ENCODE measurements at regions of chr5 and their contacts with region 1.

Region 1: DNA sequence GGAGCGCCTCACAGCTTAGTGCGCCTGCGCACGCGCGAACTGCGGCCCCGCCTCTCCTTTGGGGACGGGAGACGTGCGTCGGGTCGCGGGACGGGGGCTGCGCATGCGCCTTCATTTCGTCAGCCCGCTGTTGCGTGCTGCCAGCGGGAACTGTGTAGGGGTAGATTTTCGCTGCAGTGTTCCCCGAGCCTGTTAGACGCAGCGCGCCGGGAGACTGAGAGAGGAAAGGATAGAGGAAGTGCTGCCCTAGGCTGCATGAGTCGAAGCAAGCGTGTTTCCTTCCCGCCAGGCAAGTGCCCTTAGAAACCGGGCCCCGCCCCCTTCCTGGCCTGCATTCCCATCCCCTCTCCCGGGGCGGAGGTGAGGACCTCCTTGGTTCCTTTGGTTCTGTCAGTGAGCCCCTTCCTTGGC is 12.3 kb downstream of the ITGA1 start:
- DNase-seq: peak; percentile 97
- ATAC-seq: peak; percentile 88
- H3K4me3 Mint-ChIP-seq: peak overlapping the region; percentile 93
- H3K27ac Mint-ChIP-seq: peak overlapping the region; percentile 97
- H3K4me1 Mint-ChIP-seq: peaks cover 58% of the 10 kb centered on the region
- H3K27me3 Mint-ChIP-seq: no peaks in the 10 kb centered on the region

Region 2: DNA sequence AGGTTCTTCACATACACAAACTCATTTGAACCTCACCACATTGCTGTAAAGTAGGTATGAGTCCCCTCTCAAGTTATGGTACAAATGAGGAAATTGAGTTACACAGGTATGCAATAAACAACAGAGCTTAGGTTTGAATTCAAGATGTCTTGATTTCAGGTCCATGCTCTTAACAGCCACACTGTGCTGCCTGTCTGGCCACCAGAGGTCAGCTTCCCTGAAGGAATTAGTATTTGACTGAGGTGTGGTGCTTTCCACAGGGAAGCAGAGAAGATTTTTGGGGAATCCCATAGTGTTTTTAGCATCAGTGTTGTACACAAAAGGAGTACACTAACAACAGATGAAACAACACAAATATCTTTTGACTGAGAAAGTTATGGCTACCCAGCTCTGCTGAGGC is 106.7 kb before region 1 on chr5:
- CTCF ChIA-PET with region 1: interaction called, 36 read pairs
- POLR2A ChIA-PET with region 1: interaction called, 3 read pairs
- DNase-seq: peak; percentile 54
- ATAC-seq: peak; percentile 55
- H3K4me3 Mint-ChIP-seq: no peak overlapping the region
- H3K27ac Mint-ChIP-seq: no peak overlapping the region
- H3K4me1 Mint-ChIP-seq: peaks cover 20% of the 10 kb centered on the region
- H3K27me3 Mint-ChIP-seq: peaks cover 4% of the 10 kb centered on the region

Region 3: DNA sequence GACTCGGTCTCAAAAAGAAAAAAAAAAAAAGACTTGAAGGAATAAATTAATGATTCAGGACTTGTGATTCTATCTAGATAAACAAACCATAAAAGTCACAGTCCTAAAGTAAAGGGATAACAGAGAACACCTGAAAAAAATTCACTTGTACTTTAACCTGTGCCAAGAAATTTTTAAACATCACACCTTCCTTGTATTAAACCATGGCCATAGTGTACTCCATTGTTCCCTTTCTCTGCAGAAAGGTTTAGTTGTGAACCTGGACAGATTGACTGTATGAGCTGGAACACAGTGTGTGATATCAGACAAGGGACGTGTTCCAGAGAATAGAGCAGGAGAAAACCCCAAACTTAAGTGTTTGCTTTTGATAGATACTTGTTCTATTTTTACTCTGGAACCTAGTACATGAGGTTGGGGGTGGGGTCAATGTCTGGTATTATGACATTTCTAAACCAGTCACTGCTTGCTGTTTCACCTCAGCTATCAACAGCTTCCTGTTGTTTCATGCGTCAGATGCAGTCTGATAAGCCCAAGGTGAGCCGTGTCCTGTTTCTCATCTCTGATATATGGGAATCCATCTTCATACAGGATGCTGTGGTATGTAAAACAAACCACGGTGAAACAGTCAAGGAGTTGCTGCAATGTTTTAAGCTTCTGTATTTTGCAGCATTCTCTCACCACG is 74.8 kb before region 1 on chr5:
- CTCF ChIA-PET with region 1: interaction called, 9 read pairs
- POLR2A ChIA-PET with region 1: interaction called, 12 read pairs
- DNase-seq: peak; percentile 90
- ATAC-seq: peak; percentile 96
- H3K4me3 Mint-ChIP-seq: peak overlapping the region; percentile 58
- H3K27ac Mint-ChIP-seq: peak overlapping the region; percentile 92
- H3K4me1 Mint-ChIP-seq: peaks cover 67% of the 10 kb centered on the region
- H3K27me3 Mint-ChIP-seq: no peaks in the 10 kb centered on the region

Region 4: GRCh38 chr5:52776116-52776515 is 23.9 kb before region 1 on chr5:
- CTCF ChIA-PET with region 1: interaction called, 15 read pairs
- POLR2A ChIA-PET with region 1: interaction called, 4 read pairs
- DNase-seq: peak; percentile 71
- ATAC-seq: peak; percentile 78
- H3K4me3 Mint-ChIP-seq: peak overlapping the region; percentile 61
- H3K27ac Mint-ChIP-seq: peak overlapping the region; percentile 90
- H3K4me1 Mint-ChIP-seq: peaks cover 59% of the 10 kb centered on the region
- H3K27me3 Mint-ChIP-seq: no peaks in the 10 kb centered on the region

Region 5: GRCh38 chr5:52787600-52788504 is 12.1 kb before region 1 on chr5 and contains the starts of genes ITGA1 and PELO:
- CTCF ChIA-PET with region 1: interaction called, 38 read pairs
- POLR2A ChIA-PET with region 1: interaction called, 13 read pairs
- DNase-seq: peak; percentile 64
- ATAC-seq: peak; percentile 95
- H3K4me3 Mint-ChIP-seq: peak within 1 kb of the TSS; percentile 92
- H3K27ac Mint-ChIP-seq: peak within 1 kb of the TSS; percentile 88
- H3K4me1 Mint-ChIP-seq: peaks cover 47% of the 10 kb centered on the region
- H3K27me3 Mint-ChIP-seq: no peaks in the 10 kb centered on the region
- total RNA-seq, gene ITGA1: 18.0 to 19.2 TPM
- total RNA-seq, gene PELO: 22.9 to 25.7 TPM

Region 6: DNA sequence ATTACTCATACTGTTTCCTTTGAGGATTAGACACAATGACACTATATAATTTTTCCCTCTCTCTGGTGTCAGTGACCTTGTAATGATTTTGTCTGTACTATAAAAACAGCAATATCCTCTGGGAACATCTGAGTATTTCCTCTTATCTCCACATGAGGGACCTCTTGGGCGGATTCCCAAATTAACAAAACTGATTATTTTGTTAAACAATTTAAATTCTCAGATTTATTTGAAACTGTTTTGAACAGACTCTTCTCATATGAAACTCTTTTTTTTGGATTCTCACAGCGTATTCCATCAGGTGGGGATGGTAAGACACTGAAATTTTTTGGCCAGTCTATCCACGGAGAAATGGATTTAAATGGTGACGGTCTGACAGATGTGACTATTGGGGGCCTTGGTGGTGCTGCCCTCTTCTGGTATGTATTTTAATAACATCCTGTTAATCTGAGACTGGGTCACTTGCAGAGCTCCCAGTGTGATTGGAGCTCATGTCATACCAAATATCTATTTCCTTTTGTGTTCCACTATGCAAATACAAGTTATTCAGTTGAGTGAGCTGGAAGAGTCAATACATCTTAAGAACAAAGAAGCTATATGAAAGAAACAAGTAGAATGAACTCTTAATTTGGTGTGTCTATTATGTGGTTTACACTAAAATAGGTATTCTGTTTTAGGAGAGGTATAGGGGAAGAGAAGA is 115.3 kb after region 1 on chr5:
- CTCF ChIA-PET with region 1: interaction called, 30 read pairs
- POLR2A ChIA-PET with region 1: no interaction called
- DNase-seq: peak; percentile 74
- ATAC-seq: peak; percentile 93
- H3K4me3 Mint-ChIP-seq: peak overlapping the region; percentile 50
- H3K27ac Mint-ChIP-seq: no peak overlapping the region
- H3K4me1 Mint-ChIP-seq: peaks cover 10% of the 10 kb centered on the region
- H3K27me3 Mint-ChIP-seq: no peaks in the 10 kb centered on the region

Measured in activated CD8-positive, alpha-beta T cell treated with anti-CD3 and anti-CD28 coated beads, Interleukin-2, amount 10 ng/mL, durations not matched to agents 7 days and 5 days (primary cell).